ENCODE measurements at regions of chr1 and their contacts with region 1.

Region 1: DNA sequence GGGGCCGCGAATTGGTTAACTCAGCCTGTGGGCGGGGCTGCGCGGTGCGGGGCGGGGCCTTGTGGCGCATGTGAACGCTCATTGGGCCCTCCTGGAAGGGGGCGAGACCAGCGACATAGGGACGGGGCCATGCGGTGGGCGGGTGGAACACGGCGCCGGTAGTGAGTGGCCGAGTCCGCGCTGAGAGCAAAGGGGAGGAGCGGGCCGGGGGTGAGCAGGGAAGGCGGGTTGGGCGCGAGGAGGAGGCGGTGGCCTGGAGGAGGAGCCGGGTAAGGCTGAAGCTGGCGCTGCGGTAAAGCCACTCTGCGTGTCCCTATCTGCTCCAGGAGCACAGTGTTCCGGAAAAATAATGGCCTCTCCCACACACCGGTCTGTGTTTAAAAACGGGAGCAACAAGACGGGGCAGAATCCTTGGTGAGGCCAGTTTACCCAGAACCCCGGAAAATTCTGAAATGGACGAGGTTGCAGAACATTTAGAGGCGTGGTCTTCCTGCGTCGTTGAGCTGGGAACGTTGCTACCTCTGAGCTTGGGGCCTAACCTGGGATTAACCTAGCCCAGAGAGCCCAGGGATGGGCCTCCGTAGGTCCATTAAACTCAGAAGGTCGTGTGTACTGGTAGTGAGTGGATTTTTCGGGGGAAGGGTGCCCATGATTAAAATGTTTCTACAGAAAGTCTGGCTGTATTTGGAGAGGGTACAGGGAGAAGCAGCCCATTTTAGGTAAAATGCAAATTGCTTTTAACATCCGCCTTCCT is 533 bp upstream of the CTNNBIP1 start:
- DNase-seq: peak; percentile 99 to 100 (median 100)
- ATAC-seq: peak; percentile 88
- H3K4me3 ChIP-seq: peak overlapping the region; percentile 88 to 89
- H3K4me3 Mint-ChIP-seq: peak overlapping the region; percentile 95
- H3K27ac ChIP-seq: peak overlapping the region; percentile 79 to 87
- H3K27ac Mint-ChIP-seq: peak overlapping the region; percentile 97
- H3K4me1 ChIP-seq: peaks cover 17% of the 10 kb centered on the region
- H3K4me1 Mint-ChIP-seq: peaks cover 28% of the 10 kb centered on the region
- H3K27me3 ChIP-seq: no peaks in the 10 kb centered on the region
- H3K27me3 Mint-ChIP-seq: no peaks in the 10 kb centered on the region
- CTCF ChIP-seq: no peak

Region 2: GRCh38 chr1:8878448-8879347 is 1031.9 kb before region 1 on chr1 and contains the start of gene ENO1:
- CTCF ChIA-PET with region 1: no interaction called
- POLR2A ChIA-PET with region 1: no interaction called
- intact Hi-C with region 1: loop called in 1 of 2 experiments (anchors 5 kb)
- DNase-seq: peak; percentile 96 to 100 (median 99)
- ATAC-seq: peak; percentile 80
- H3K4me3 ChIP-seq: peak within 1 kb of the TSS; percentile 90 to 94
- H3K4me3 Mint-ChIP-seq: peak within 1 kb of the TSS; percentile 92
- H3K27ac ChIP-seq: peak within 1 kb of the TSS; percentile 80 to 99
- H3K27ac Mint-ChIP-seq: peak within 1 kb of the TSS; percentile 98
- H3K4me1 ChIP-seq: peaks cover 43% of the 10 kb centered on the region
- H3K4me1 Mint-ChIP-seq: peaks cover 47% of the 10 kb centered on the region
- H3K27me3 ChIP-seq: no peaks in the 10 kb centered on the region
- H3K27me3 Mint-ChIP-seq: no peaks in the 10 kb centered on the region
- CTCF ChIP-seq: no peak
- total RNA-seq, gene ENO1: 130 to 136 TPM

Region 3: GRCh38 chr1:9428601-9429341 is 481.8 kb before region 1 on chr1:
- CTCF ChIA-PET with region 1: no interaction called
- POLR2A ChIA-PET with region 1: no interaction called
- intact Hi-C with region 1: loop called in 1 of 2 experiments (anchors 2 kb)
- DNase-seq: peak; percentile 99 to 100 (median 100)
- ATAC-seq: peak; percentile 79
- H3K4me3 ChIP-seq: peak overlapping the region; percentile 51 to 54
- H3K4me3 Mint-ChIP-seq: peak overlapping the region; percentile 97
- H3K27ac ChIP-seq: peak overlapping the region; percentile 64 to 69
- H3K27ac Mint-ChIP-seq: peak overlapping the region; percentile 99
- H3K4me1 ChIP-seq: peaks cover 44% of the 10 kb centered on the region
- H3K4me1 Mint-ChIP-seq: peaks cover 51% of the 10 kb centered on the region
- H3K27me3 ChIP-seq: peaks cover 0 to 4% of the 10 kb centered on the region in 2 experiments
- H3K27me3 Mint-ChIP-seq: no peaks in the 10 kb centered on the region
- CTCF ChIP-seq: no peak

Region 4: GRCh38 chr1:9689011-9689706 is 221.4 kb before region 1 on chr1:
- CTCF ChIA-PET with region 1: no interaction called
- POLR2A ChIA-PET with region 1: no interaction called
- intact Hi-C with region 1: loop called in 1 of 2 experiments (anchors 2 kb)
- DNase-seq: peak; percentile 67 to 91 (median 84)
- ATAC-seq: peak; percentile 77
- H3K4me3 ChIP-seq: peak overlapping the region; percentile 55 to 72
- H3K4me3 Mint-ChIP-seq: peak overlapping the region; percentile 81
- H3K27ac ChIP-seq: peak overlapping the region; percentile 33 to 78
- H3K27ac Mint-ChIP-seq: peak overlapping the region; percentile 82
- H3K4me1 ChIP-seq: peaks cover 77% of the 10 kb centered on the region
- H3K4me1 Mint-ChIP-seq: peaks cover 69% of the 10 kb centered on the region
- H3K27me3 ChIP-seq: no peaks in the 10 kb centered on the region
- H3K27me3 Mint-ChIP-seq: no peaks in the 10 kb centered on the region
- CTCF ChIP-seq: no peak

Region 5: DNA sequence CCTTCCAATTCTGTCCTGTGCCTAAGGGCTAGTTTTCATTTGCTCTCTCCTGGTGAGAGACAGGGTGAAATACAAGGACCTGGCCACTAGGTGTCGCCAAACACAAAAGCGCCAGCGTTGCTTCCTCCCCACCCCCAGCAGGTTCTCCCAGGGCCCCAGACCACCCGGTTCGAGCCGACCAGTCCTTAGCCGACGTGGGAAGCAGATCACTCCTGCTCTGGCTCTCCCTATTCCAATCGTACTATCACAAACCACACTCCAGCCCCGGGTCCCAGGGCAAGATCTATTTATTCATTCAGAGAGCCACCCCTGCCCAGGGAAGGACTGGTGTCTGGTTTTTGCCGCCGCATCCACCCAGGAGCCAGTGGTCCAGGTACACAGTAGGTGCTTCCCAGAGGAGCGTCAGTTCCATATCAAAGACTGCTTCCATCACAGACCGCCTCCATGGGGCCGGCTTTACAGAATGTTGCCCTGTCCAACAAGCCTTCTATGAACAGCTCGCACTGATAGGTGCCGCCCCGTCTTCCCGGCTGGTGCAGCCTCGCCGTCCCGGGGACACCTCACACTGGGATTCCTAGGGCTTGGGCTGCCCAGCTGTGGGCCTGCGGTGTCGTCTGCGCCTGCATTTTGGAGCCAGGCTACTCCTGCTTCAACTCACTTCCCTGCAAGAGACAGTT is 35.5 kb before region 1 on chr1:
- CTCF ChIA-PET with region 1: interaction called, 4 read pairs
- POLR2A ChIA-PET with region 1: no interaction called
- intact Hi-C with region 1: loop called in 1 of 2 experiments (anchors 2 kb)
- DNase-seq: peak; percentile 49 to 85 (median 76)
- ATAC-seq: peak; percentile 99
- H3K4me3 ChIP-seq: no peak overlapping the region
- H3K4me3 Mint-ChIP-seq: peak overlapping the region; percentile 26
- H3K27ac ChIP-seq: no peak overlapping the region
- H3K27ac Mint-ChIP-seq: no peak overlapping the region
- H3K4me1 ChIP-seq: no peaks in the 10 kb centered on the region
- H3K4me1 Mint-ChIP-seq: peaks cover 4% of the 10 kb centered on the region
- H3K27me3 ChIP-seq: no peaks in the 10 kb centered on the region
- H3K27me3 Mint-ChIP-seq: no peaks in the 10 kb centered on the region
- CTCF ChIP-seq: peak; percentile 83

Region 6: DNA sequence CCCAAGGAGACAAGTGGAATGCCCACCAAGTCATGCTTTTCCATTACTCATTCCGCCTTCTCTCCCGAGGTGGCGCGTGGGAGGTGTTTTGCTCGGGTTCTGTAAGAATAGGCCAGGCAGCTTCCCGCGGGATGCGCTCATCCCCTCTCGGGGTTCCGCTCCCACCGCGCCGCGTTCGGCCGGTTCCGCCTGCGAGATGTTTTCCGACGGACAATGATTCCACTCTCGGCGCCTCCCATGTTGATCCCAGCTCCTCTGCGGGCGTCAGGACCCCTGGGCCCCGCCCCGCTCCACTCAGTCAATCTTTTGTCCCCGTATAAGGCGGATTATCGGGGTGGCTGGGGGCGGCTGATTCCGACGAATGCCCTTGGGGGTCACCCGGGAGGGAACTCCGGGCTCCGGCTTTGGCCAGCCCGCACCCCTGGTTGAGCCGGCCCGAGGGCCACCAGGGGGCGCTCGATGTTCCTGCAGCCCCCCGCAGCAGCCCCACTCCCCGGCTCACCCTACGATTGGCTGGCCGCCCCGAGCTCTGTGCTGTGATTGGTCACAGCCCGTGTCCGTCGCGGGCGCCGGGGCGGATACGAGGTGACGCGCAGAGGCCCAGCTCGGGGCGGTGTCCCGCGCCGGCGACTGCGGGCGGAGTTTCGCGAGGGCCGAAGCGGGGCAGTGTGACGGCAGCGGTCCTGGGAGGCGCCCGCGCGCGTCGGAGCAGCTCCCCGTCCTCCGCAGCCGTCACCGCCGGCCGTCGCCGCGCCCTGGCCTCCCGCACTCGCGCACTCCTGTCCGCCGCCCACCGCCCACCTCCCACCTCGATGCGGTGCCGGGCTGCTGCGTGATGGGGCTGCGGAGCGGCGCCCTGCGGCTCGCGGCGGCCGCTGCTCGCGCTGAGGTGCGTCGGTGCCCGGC is 299.6 kb after region 1 on chr1 and contains the start of gene KIF1B:
- CTCF ChIA-PET with region 1: no interaction called
- POLR2A ChIA-PET with region 1: no interaction called
- intact Hi-C with region 1: loop called in 1 of 2 experiments (anchors 2 kb)
- DNase-seq: peak; percentile 92 to 98 (median 97)
- ATAC-seq: peak; percentile 98
- H3K4me3 ChIP-seq: peak within 1 kb of the TSS; percentile 67 to 82
- H3K4me3 Mint-ChIP-seq: peak within 1 kb of the TSS; percentile 91
- H3K27ac ChIP-seq: peak within 1 kb of the TSS; percentile 54 to 60
- H3K27ac Mint-ChIP-seq: peak within 1 kb of the TSS; percentile 55
- H3K4me1 ChIP-seq: peaks cover 5% of the 10 kb centered on the region
- H3K4me1 Mint-ChIP-seq: peaks cover 25% of the 10 kb centered on the region
- H3K27me3 ChIP-seq: peaks cover 0 to 2% of the 10 kb centered on the region in 2 experiments
- H3K27me3 Mint-ChIP-seq: peaks cover 2% of the 10 kb centered on the region
- CTCF ChIP-seq: peak; percentile 99
- total RNA-seq, gene KIF1B: 6.1 to 7.2 TPM

Region 7: GRCh38 chr1:11059990-11060830 is 1149.6 kb after region 1 on chr1 and contains the start of gene SRM:
- CTCF ChIA-PET with region 1: no interaction called
- POLR2A ChIA-PET with region 1: no interaction called
- intact Hi-C with region 1: loop called in 1 of 2 experiments (anchors 2 kb)
- DNase-seq: peak; percentile 80 to 95 (median 89)
- ATAC-seq: peak; percentile 94
- H3K4me3 ChIP-seq: peak within 1 kb of the TSS; percentile 77 to 84
- H3K4me3 Mint-ChIP-seq: peak within 1 kb of the TSS; percentile 91
- H3K27ac ChIP-seq: peak within 1 kb of the TSS; percentile 69 to 82
- H3K27ac Mint-ChIP-seq: peak within 1 kb of the TSS; percentile 92
- H3K4me1 ChIP-seq: peaks cover 22% of the 10 kb centered on the region
- H3K4me1 Mint-ChIP-seq: peaks cover 32% of the 10 kb centered on the region
- H3K27me3 ChIP-seq: no peaks in the 10 kb centered on the region
- H3K27me3 Mint-ChIP-seq: no peaks in the 10 kb centered on the region
- CTCF ChIP-seq: peak; percentile 49
- total RNA-seq, gene SRM: 31.4 to 40.6 TPM

Measured in CD8-positive, alpha-beta T cell (primary cell).